ENCODE measurements at regions of chr7 and their contacts with region 1.

Region 1: GRCh38 chr7:33185786-33186185 is 56.4 kb downstream of the BBS9 start:
- DNase-seq: peak; percentile 63
- H3K4me3 ChIP-seq: no peak overlapping the region; a peak in 1 of 4 replicates
- H3K27ac ChIP-seq: no peak overlapping the region
- H3K4me1 ChIP-seq: peaks cover 0 to 6% of the 10 kb centered on the region in 2 experiments; a peak in 2 of 4 replicates
- H3K27me3 ChIP-seq: no peaks in the 10 kb centered on the region
- CTCF ChIP-seq: peak; percentile 95
- EP300 ChIP-seq: no peak
- RAD21 ChIP-seq: peak; percentile 98

Region 2: GRCh38 chr7:32403463-32404229 is 782.1 kb before region 1 on chr7:
- CTCF ChIA-PET with region 1: no interaction called
- POLR2A ChIA-PET with region 1: no interaction called
- DNase-seq: no peak
- H3K4me3 ChIP-seq: no peak overlapping the region
- H3K27ac ChIP-seq: no peak overlapping the region
- H3K4me1 ChIP-seq: no peaks in the 10 kb centered on the region
- H3K27me3 ChIP-seq: no peaks in the 10 kb centered on the region; the same call in 1 of the 2 replicates
- CTCF ChIP-seq: no peak
- EP300 ChIP-seq: no peak
- RAD21 ChIP-seq: no peak

Region 3: DNA sequence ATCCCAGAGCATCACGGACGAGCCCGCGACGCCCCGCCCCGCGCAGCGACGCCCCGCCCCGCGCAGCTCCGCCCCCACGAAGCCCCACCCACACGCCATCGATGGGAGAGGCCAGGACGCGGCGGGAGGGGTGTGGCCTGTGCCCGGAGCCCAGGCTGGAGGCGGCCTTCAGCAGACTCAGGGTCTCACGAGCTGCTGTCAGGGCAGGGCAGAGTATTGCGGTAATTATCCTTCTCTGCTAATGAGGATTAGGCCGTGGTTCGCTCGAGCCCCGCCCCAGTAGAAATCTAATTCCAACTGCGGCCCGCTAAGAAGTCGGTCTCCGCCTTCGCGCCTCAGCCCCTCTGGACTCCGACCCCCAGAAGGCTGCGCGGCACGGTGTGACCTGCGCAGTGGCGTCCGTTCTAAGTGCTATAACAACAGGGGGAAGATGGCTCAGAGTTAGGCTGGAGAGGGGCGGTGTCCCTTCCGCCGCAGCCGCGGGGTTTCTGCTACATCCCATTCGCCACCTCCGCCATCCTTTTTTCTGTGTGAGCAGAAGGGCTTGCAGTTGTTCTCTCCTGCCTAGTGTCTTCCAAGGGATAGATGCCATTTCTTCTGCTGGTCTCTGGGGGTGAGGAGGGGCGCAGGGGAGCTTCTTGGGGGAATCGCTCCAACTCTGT is 122.9 kb before region 1 on chr7:
- CTCF ChIA-PET with region 1: no interaction called
- POLR2A ChIA-PET with region 1: no interaction called
- DNase-seq: peak; percentile 99
- H3K4me3 ChIP-seq: peak overlapping the region; percentile 81 to 85
- H3K27ac ChIP-seq: peak overlapping the region; percentile 91 to 96
- H3K4me1 ChIP-seq: peaks cover 3 to 10% of the 10 kb centered on the region in 2 experiments; a peak in 2 of 4 replicates
- H3K27me3 ChIP-seq: no peaks in the 10 kb centered on the region
- CTCF ChIP-seq: no peak
- EP300 ChIP-seq: no peak
- RAD21 ChIP-seq: no peak

Region 4: DNA sequence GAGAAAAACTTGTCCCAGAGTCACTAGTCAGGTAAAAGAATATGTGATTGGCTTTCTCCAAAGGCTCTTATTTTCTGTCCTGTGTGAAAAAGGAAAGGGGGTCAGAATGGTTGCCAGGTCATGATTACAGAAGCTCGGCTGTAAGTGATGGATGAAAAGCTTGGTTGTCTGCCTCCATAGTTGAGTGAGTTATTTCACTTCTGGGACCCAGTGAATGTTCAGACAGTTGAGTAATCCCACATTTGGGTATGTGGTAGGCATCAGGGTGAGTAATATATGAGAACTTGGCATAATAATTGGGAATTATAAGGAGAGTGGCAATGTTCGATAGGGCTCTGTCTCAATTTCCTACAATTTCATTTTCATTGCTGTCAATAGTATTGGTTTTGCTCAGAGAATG is 16.0 kb after region 1 on chr7:
- CTCF ChIA-PET with region 1: interaction called, 14 read pairs
- POLR2A ChIA-PET with region 1: no interaction called
- DNase-seq: no peak
- H3K4me3 ChIP-seq: no peak overlapping the region
- H3K27ac ChIP-seq: no peak overlapping the region
- H3K4me1 ChIP-seq: no peaks in the 10 kb centered on the region
- H3K27me3 ChIP-seq: no peaks in the 10 kb centered on the region
- CTCF ChIP-seq: no peak
- EP300 ChIP-seq: no peak
- RAD21 ChIP-seq: no peak

Region 5: GRCh38 chr7:33237036-33237435 is 51.2 kb after region 1 on chr7:
- CTCF ChIA-PET with region 1: interaction called, 11 read pairs
- POLR2A ChIA-PET with region 1: no interaction called
- DNase-seq: no peak
- H3K4me3 ChIP-seq: no peak overlapping the region
- H3K27ac ChIP-seq: no peak overlapping the region
- H3K4me1 ChIP-seq: peaks cover 0 to 4% of the 10 kb centered on the region in 2 experiments; a peak in 1 of 4 replicates
- H3K27me3 ChIP-seq: no peaks in the 10 kb centered on the region
- CTCF ChIP-seq: no peak
- EP300 ChIP-seq: no peak
- RAD21 ChIP-seq: no peak

Region 6: DNA sequence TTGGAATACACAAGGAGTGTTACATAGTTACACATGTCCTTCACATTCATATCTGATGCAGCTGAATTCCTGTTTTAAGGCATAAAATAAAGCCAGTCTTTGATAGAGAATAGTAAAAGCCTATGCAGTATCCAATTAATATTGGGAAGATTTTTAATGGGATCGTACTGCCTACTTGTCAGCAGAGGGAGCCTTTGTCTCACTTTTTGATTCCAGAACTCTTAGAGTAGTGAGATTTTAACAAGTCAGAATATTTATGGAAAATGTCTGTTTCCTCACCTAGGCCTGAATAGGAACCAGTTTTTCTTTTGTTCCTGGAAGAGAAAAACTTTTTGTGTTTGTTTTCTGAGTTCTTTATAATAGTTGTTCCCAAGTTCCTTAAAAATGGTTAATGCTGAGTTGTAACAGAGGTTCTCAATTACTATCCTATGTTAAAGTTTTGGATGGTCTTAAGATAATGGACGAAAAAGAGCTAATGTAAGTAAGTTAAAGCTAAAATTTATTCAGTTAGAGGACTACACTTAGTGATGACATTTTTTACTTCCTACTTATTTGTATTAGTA is 57.6 kb after region 1 on chr7:
- CTCF ChIA-PET with region 1: interaction called, 13 read pairs
- POLR2A ChIA-PET with region 1: no interaction called
- DNase-seq: peak; percentile 57
- H3K4me3 ChIP-seq: no peak overlapping the region
- H3K27ac ChIP-seq: no peak overlapping the region
- H3K4me1 ChIP-seq: no peaks in the 10 kb centered on the region
- H3K27me3 ChIP-seq: no peaks in the 10 kb centered on the region
- CTCF ChIP-seq: peak; percentile 97
- EP300 ChIP-seq: no peak
- RAD21 ChIP-seq: peak; percentile 99

Region 7: GRCh38 chr7:33310541-33310940 is 124.8 kb after region 1 on chr7:
- CTCF ChIA-PET with region 1: no interaction called
- POLR2A ChIA-PET with region 1: no interaction called
- DNase-seq: no peak
- H3K4me3 ChIP-seq: no peak overlapping the region
- H3K27ac ChIP-seq: no peak overlapping the region
- H3K4me1 ChIP-seq: no peaks in the 10 kb centered on the region
- H3K27me3 ChIP-seq: no peaks in the 10 kb centered on the region
- CTCF ChIP-seq: no peak
- EP300 ChIP-seq: no peak
- RAD21 ChIP-seq: no peak